ENCODE measurements at regions of chr7 and their contacts with region 1.

Region 1: DNA sequence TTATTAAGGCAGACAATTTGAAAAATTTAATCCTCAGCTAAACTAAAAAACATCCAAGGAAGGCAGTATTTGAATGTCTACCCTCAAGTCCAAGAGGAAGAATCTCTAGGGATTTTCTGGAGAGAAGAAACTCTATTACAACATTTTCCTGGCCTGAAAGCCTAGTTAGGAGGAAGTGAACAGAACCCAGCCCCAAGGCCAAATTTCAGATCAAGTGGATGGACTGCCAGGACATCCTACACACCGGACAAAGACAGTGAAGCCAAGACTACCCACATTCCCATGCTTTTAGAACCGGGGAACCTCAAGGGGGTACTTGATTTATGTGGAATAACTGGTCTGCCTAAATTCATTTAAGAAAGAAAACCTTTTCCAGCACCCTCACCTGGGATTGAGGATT is 108.9 kb upstream of the MEOX2 start:
- DNase-seq: no peak
- ATAC-seq: no peak
- H3K4me3 ChIP-seq: no peak overlapping the region
- H3K4me3 Mint-ChIP-seq: no peak overlapping the region
- H3K27ac ChIP-seq: no peak overlapping the region
- H3K27ac Mint-ChIP-seq: no peak overlapping the region
- H3K4me1 ChIP-seq: no peaks in the 10 kb centered on the region
- H3K4me1 Mint-ChIP-seq: no peaks in the 10 kb centered on the region
- H3K27me3 ChIP-seq: no peaks in the 10 kb centered on the region
- H3K27me3 Mint-ChIP-seq: no peaks in the 10 kb centered on the region
- CTCF ChIP-seq: no peak

Region 2: DNA sequence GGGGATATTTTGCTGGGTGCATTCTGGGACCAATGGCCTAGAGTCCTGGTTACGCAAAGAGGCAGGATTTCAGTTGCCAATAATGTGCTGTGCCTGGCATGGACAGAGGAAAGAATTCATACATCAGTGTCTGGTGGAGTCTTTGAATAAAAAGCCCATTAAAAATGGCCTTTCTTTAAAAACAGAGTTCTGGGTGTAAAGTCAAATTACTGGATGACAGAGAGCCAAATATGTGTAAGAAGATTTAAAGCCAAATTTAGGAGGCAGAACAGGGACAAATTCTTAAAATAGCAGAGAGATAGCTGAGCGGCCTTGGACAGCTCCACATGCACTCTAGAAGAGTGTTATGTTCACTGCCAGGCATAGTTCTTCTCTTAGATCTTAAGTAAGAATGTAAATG is 48.1 kb before region 1 on chr7:
- CTCF ChIA-PET with region 1: no interaction called
- POLR2A ChIA-PET with region 1: no interaction called
- intact Hi-C with region 1: loop called in 1 of 2 experiments (anchors 5 kb)
- DNase-seq: no peak
- ATAC-seq: no peak
- H3K4me3 ChIP-seq: no peak overlapping the region
- H3K4me3 Mint-ChIP-seq: no peak overlapping the region
- H3K27ac ChIP-seq: no peak overlapping the region
- H3K27ac Mint-ChIP-seq: no peak overlapping the region
- H3K4me1 ChIP-seq: no peaks in the 10 kb centered on the region
- H3K4me1 Mint-ChIP-seq: no peaks in the 10 kb centered on the region
- H3K27me3 ChIP-seq: no peaks in the 10 kb centered on the region
- H3K27me3 Mint-ChIP-seq: no peaks in the 10 kb centered on the region
- CTCF ChIP-seq: no peak